ENCODE measurements at regions of chr19 and their contacts with region 1.

Region 1: GRCh38 chr19:6125571-6125989 is 9.9 kb upstream of the ACSBG2 start:
- DNase-seq: peak; percentile 74 to 76
- H3K4me3 ChIP-seq: no peak overlapping the region
- H3K4me3 Mint-ChIP-seq: no peak overlapping the region
- H3K27ac Mint-ChIP-seq: no peak overlapping the region
- H3K4me1 ChIP-seq: no peaks in the 10 kb centered on the region
- H3K4me1 Mint-ChIP-seq: no peaks in the 10 kb centered on the region
- H3K27me3 ChIP-seq: no peaks in the 10 kb centered on the region
- H3K27me3 Mint-ChIP-seq: no peaks in the 10 kb centered on the region
- CTCF ChIP-seq: peak; percentile 90 to 92

Region 2: GRCh38 chr19:5987077-5987818 is 138.3 kb before region 1 on chr19:
- CTCF ChIA-PET with region 1: interaction called, 23 read pairs
- POLR2A ChIA-PET with region 1: no interaction called
- intact Hi-C with region 1: loop called (anchors 1 kb)
- DNase-seq: peak; percentile 84 to 85
- H3K4me3 ChIP-seq: no peak overlapping the region
- H3K4me3 Mint-ChIP-seq: peak overlapping the region; percentile 39
- H3K27ac Mint-ChIP-seq: peak overlapping the region; percentile 11
- H3K4me1 ChIP-seq: peaks cover 7% of the 10 kb centered on the region
- H3K4me1 Mint-ChIP-seq: peaks cover 15% of the 10 kb centered on the region
- H3K27me3 ChIP-seq: no peaks in the 10 kb centered on the region
- H3K27me3 Mint-ChIP-seq: no peaks in the 10 kb centered on the region
- CTCF ChIP-seq: peak; percentile 78 to 85

Region 3: GRCh38 chr19:6048808-6049405 is 76.7 kb before region 1 on chr19:
- CTCF ChIA-PET with region 1: interaction called, 48 read pairs
- POLR2A ChIA-PET with region 1: no interaction called
- intact Hi-C with region 1: loop called (anchors 1 kb)
- DNase-seq: peak; percentile 69 to 80
- H3K4me3 ChIP-seq: no peak overlapping the region
- H3K4me3 Mint-ChIP-seq: peak overlapping the region; percentile 15
- H3K27ac Mint-ChIP-seq: no peak overlapping the region
- H3K4me1 ChIP-seq: peaks cover 9% of the 10 kb centered on the region; the same call in 1 of the 2 replicates
- H3K4me1 Mint-ChIP-seq: peaks cover 6% of the 10 kb centered on the region
- H3K27me3 ChIP-seq: no peaks in the 10 kb centered on the region
- H3K27me3 Mint-ChIP-seq: no peaks in the 10 kb centered on the region
- CTCF ChIP-seq: peak; percentile 83 to 89

Region 4: GRCh38 chr19:6056801-6057650 is 68.6 kb before region 1 on chr19:
- CTCF ChIA-PET with region 1: interaction called, 22 read pairs
- POLR2A ChIA-PET with region 1: no interaction called
- intact Hi-C with region 1: loop called (anchors 1 kb)
- DNase-seq: peak; percentile 42 to 48
- H3K4me3 ChIP-seq: no peak overlapping the region
- H3K4me3 Mint-ChIP-seq: no peak overlapping the region
- H3K27ac Mint-ChIP-seq: peak overlapping the region; percentile 80
- H3K4me1 ChIP-seq: peaks cover 33% of the 10 kb centered on the region
- H3K4me1 Mint-ChIP-seq: peaks cover 31% of the 10 kb centered on the region
- H3K27me3 ChIP-seq: no peaks in the 10 kb centered on the region
- H3K27me3 Mint-ChIP-seq: no peaks in the 10 kb centered on the region
- CTCF ChIP-seq: no peak

Region 5: DNA sequence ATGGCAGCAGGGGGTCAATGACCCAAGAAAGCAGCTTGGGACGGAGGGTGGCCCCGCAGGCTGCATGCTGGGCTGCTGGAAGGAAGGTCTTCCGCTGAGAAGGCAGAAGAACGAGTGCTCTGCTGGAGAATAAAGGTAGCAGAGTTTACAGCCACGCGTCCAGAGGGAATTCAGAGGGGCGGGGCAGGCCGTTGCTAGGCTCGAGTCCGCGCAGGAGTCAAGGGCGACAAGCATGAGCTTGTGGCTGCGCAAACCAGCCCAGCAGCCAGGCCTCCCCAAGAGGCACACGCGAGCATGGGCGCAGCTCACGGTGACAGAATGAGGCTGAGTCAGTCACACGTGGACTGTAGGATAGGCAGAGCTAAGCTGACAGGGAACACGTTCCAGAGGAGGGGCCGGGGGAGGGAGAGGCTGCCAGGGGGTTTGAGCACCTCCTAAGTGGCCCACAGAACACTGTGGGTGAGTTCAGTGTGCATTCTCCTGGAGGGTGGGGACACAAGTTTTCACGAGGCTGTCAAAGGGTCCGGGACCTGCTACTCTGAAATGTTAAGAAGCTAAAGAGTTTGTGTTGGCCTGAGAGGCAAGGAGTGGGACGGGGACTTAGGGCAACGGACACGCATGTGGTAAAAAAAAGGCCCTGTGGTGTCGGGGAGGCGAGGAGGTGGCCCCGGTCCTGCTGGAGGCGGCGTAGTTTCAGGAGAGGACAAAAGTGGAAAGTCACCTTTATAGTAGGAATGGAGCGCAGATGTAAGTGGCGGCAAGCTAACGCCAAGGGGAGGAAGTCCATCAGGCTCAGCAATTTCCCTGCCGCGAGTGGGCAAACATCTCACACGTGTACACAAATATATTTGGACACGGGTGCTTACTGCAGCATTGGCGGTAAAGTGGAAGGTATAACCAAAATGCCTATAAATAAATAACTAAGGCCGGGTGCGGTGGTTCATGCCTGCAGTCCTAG is 33.0 kb before region 1 on chr19:
- CTCF ChIA-PET with region 1: interaction called, 10 read pairs
- POLR2A ChIA-PET with region 1: no interaction called
- intact Hi-C with region 1: no loop called
- DNase-seq: peak; percentile 84 to 90
- H3K4me3 ChIP-seq: peak overlapping the region; percentile 30
- H3K4me3 Mint-ChIP-seq: peak overlapping the region; percentile 70
- H3K27ac Mint-ChIP-seq: peak overlapping the region; percentile 95
- H3K4me1 ChIP-seq: peaks cover 31% of the 10 kb centered on the region
- H3K4me1 Mint-ChIP-seq: peaks cover 26% of the 10 kb centered on the region
- H3K27me3 ChIP-seq: no peaks in the 10 kb centered on the region
- H3K27me3 Mint-ChIP-seq: no peaks in the 10 kb centered on the region
- CTCF ChIP-seq: no peak